ENCODE measurements at regions of chr4 and their contacts with region 1.

Region 1: DNA sequence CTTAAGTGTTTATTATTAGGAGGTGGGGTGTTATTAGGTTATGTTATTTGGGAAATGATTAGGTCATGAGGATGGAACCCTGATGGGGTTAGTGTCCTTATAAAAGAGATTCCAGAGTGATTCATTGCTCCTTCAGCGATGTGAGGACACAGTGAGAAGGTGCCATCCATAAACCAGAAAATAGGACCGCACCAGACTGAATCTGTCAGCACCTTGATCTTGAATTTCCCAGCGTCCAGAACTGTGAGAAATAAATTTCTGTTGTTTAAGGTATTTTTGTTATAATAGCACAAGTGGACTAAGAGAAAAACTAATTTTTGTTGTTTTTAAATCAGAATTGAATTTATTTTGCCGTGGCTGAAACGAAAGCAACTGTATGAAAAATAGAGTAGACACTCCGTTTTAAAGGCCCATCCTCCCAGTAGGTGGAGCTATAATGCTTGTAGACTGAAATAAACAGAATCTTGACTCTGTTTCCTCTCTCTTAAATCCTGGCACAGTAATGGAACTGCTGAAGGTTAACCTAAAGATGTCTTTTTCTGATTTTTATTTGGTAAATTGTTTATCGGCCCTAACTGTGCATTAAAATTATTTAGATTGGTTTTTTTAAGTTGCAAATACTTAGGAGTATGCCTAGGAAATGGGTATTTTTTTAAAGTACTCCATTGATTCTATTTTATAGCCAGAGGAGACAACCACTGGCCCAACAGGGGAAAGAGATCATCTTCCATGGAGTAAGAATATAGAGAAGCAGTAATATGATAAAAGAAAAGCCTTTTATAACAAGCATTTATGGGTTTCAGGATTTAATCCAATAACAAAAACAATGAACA is 133.2 kb upstream of the ADAMTS3 start:
- DNase-seq: peak; percentile 39
- ATAC-seq: no peak
- H3K4me3 ChIP-seq: peak overlapping the region in 3 of 5 experiments; percentile 21 to 31 (median 29)
- H3K4me3 Mint-ChIP-seq: peak overlapping the region; percentile 74
- H3K27ac ChIP-seq: no peak overlapping the region
- H3K27ac Mint-ChIP-seq: no peak overlapping the region
- H3K4me1 ChIP-seq: no peaks in the 10 kb centered on the region
- H3K4me1 Mint-ChIP-seq: no peaks in the 10 kb centered on the region
- H3K27me3 ChIP-seq: no peaks in the 10 kb centered on the region
- H3K27me3 Mint-ChIP-seq: peaks cover 3% of the 10 kb centered on the region
- CTCF ChIP-seq: peak; percentile 57

Region 2: GRCh38 chr4:73446336-73446938 is 744.2 kb after region 1 on chr4:
- CTCF ChIA-PET with region 1: no interaction called
- POLR2A ChIA-PET with region 1: no interaction called
- intact Hi-C with region 1: loop called (anchors 5 kb)
- DNase-seq: peak; percentile 41
- ATAC-seq: peak; percentile 83
- H3K4me3 ChIP-seq: no peak overlapping the region
- H3K4me3 Mint-ChIP-seq: no peak overlapping the region
- H3K27ac ChIP-seq: no peak overlapping the region
- H3K27ac Mint-ChIP-seq: no peak overlapping the region
- H3K4me1 ChIP-seq: no peaks in the 10 kb centered on the region
- H3K4me1 Mint-ChIP-seq: no peaks in the 10 kb centered on the region
- H3K27me3 ChIP-seq: peaks cover 0 to 4% (median 0%) of the 10 kb centered on the region in 4 experiments
- H3K27me3 Mint-ChIP-seq: peaks cover 25% of the 10 kb centered on the region
- CTCF ChIP-seq: peak; percentile 82

Region 3: GRCh38 chr4:74133786-74134499 is 1431.7 kb after region 1 on chr4:
- CTCF ChIA-PET with region 1: interaction called, 3 read pairs
- POLR2A ChIA-PET with region 1: no interaction called
- intact Hi-C with region 1: loop called (anchors 5 kb)
- DNase-seq: peak; percentile 47
- ATAC-seq: peak; percentile 31
- H3K4me3 ChIP-seq: no peak overlapping the region
- H3K4me3 Mint-ChIP-seq: no peak overlapping the region
- H3K27ac ChIP-seq: no peak overlapping the region
- H3K27ac Mint-ChIP-seq: no peak overlapping the region
- H3K4me1 ChIP-seq: no peaks in the 10 kb centered on the region
- H3K4me1 Mint-ChIP-seq: no peaks in the 10 kb centered on the region
- H3K27me3 ChIP-seq: peaks cover 0 to 9% (median 0%) of the 10 kb centered on the region in 4 experiments
- H3K27me3 Mint-ChIP-seq: peaks cover 25% of the 10 kb centered on the region
- CTCF ChIP-seq: peak; percentile 62